ENCODE measurements at regions of chr2 and their contacts with region 1.

Region 1: GRCh38 chr2:219642465-219643080 is 15.1 kb downstream of the SLC4A3 start:
- DNase-seq: peak; percentile 96
- H3K4me3 ChIP-seq: no peak overlapping the region
- H3K4me3 Mint-ChIP-seq: no peak overlapping the region
- H3K27ac Mint-ChIP-seq: peak overlapping the region; percentile 62
- H3K4me1 ChIP-seq: peaks cover 35% of the 10 kb centered on the region
- H3K4me1 Mint-ChIP-seq: peaks cover 19% of the 10 kb centered on the region
- H3K27me3 ChIP-seq: no peaks in the 10 kb centered on the region
- H3K27me3 Mint-ChIP-seq: no peaks in the 10 kb centered on the region
- CTCF ChIP-seq: peak; percentile 99 to 100

Region 2: GRCh38 chr2:219552382-219553167 is 90.0 kb before region 1 on chr2:
- CTCF ChIA-PET with region 1: no interaction called
- POLR2A ChIA-PET with region 1: no interaction called
- intact Hi-C with region 1: loop called (anchors 1 kb)
- DNase-seq: peak; percentile 88 to 93
- H3K4me3 ChIP-seq: peak overlapping the region; percentile 87
- H3K4me3 Mint-ChIP-seq: peak overlapping the region; percentile 79
- H3K27ac Mint-ChIP-seq: peak overlapping the region; percentile 35
- H3K4me1 ChIP-seq: peaks cover 4% of the 10 kb centered on the region
- H3K4me1 Mint-ChIP-seq: no peaks in the 10 kb centered on the region
- H3K27me3 ChIP-seq: no peaks in the 10 kb centered on the region
- H3K27me3 Mint-ChIP-seq: no peaks in the 10 kb centered on the region
- CTCF ChIP-seq: no peak

Region 3: DNA sequence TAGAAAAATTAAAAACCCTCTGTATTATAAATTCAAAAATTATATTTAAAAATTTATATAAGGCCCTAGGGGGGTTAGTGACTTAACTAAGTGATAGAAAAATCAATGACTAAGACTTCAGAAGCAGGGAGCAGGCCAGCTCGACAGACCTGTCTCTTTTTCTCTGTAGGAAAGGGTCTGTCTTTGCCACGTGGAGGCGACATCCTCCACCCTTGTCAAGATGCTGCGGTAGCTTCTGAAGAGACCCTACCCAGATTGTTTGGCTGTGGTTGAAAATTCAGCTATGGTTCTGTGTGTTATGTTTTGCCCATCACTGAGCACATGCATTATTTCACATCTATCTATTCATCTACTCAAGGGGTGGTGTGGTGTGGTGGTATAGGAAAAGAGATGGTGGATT is 23.3 kb before region 1 on chr2:
- CTCF ChIA-PET with region 1: interaction called, 7 read pairs
- POLR2A ChIA-PET with region 1: no interaction called
- intact Hi-C with region 1: loop called (anchors 1 kb)
- DNase-seq: no peak
- H3K4me3 ChIP-seq: no peak overlapping the region
- H3K4me3 Mint-ChIP-seq: no peak overlapping the region
- H3K27ac Mint-ChIP-seq: no peak overlapping the region
- H3K4me1 ChIP-seq: no peaks in the 10 kb centered on the region
- H3K4me1 Mint-ChIP-seq: no peaks in the 10 kb centered on the region
- H3K27me3 ChIP-seq: no peaks in the 10 kb centered on the region
- H3K27me3 Mint-ChIP-seq: no peaks in the 10 kb centered on the region
- CTCF ChIP-seq: peak in 1 of 2 experiments; percentile 24

Region 4: DNA sequence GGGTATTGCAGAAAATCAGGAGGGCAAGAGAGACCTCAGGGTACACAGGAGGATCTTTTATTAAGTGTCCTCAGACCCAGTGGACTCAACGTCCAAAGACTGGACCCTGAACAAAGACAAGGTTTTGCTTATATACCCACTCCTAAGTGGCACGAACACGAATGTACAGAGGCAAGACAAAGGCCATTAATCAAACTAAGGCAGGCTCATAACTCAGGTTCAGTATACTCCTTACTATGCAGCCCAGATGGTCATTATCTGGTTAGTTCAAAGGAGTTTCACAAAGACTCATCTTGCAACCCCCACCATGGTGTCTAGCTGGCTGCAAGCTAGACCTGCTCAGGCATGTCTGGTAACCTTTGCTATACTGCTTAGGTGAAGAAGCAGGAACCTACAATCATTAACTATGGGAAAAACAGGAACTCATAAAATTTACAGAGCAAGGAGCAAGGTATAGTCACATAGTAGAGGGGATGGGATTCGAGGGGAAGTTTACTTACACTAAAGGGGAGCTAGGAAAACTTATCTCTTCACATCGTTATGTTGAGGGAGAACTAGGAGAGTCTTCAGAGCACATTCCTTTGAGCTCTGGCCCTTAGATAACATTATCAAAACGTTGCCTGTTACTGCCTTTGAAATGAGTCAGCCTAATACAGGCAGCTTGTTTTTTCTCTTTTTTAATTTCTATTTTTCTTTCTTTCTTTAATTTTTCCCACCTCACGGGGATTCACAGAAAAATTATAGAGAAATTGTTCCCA is 18.8 kb after region 1 on chr2:
- CTCF ChIA-PET with region 1: no interaction called
- POLR2A ChIA-PET with region 1: no interaction called
- intact Hi-C with region 1: loop called (anchors 1 kb)
- DNase-seq: peak; percentile 66 to 87
- H3K4me3 ChIP-seq: no peak overlapping the region
- H3K4me3 Mint-ChIP-seq: peak overlapping the region; percentile 20
- H3K27ac Mint-ChIP-seq: peak overlapping the region; percentile 76
- H3K4me1 ChIP-seq: peaks cover 43% of the 10 kb centered on the region
- H3K4me1 Mint-ChIP-seq: peaks cover 19% of the 10 kb centered on the region
- H3K27me3 ChIP-seq: no peaks in the 10 kb centered on the region
- H3K27me3 Mint-ChIP-seq: no peaks in the 10 kb centered on the region
- CTCF ChIP-seq: no peak

Measured in Caco-2 (cell line).